Gastrocnemius medialis (tissue), 4 donors: ENCODE measurements at regions of chr10 and their contacts with region 1.

Region 1: GRCh38 chr10:92573798-92574547 is at the start of gene IDE:
- DNase-seq: peak; percentile 65 to 84
- ATAC-seq: peak; percentile 92
- H3K4me3 ChIP-seq: peak within 1 kb of the TSS; percentile 81 to 100 (median 95)
- H3K27ac ChIP-seq: peak within 1 kb of the TSS; percentile 94 to 98 (median 95)
- H3K4me1 ChIP-seq: peaks cover 22 to 30% of the 10 kb centered on the region in 2 donors
- H3K27me3 ChIP-seq: no peaks in the 10 kb centered on the region
- CTCF ChIP-seq: peak; percentile 69 to 94 (median 84)
- POLR2A ChIP-seq: peak; percentile 43 to 55
- total RNA-seq, gene IDE: 41.2 to 71.0 (median 52.9) TPM

Region 2: GRCh38 chr10:91590142-91590903 is 983.6 kb before region 1 on chr10:
- in situ Hi-C with region 1: no loop called
- intact Hi-C with region 1: no loop called
- DNase-seq: peak in 1 of 2 donors; percentile 67
- ATAC-seq: no peak
- H3K4me3 ChIP-seq: no peak overlapping the region
- H3K27ac ChIP-seq: peak overlapping the region; percentile 87 to 91 (median 90)
- H3K4me1 ChIP-seq: peaks cover 75 to 78% of the 10 kb centered on the region in 2 donors
- H3K27me3 ChIP-seq: no peaks in the 10 kb centered on the region
- CTCF ChIP-seq: no peak
- POLR2A ChIP-seq: no peak

Region 3: GRCh38 chr10:92087750-92088395 is 486.1 kb before region 1 on chr10:
- in situ Hi-C with region 1: no loop called
- intact Hi-C with region 1: loop called (anchors 10 kb)
- DNase-seq: peak; percentile 52 to 75
- ATAC-seq: peak; percentile 95 to 98
- H3K4me3 ChIP-seq: no peak overlapping the region
- H3K27ac ChIP-seq: peak overlapping the region; percentile 23 to 58 (median 38)
- H3K4me1 ChIP-seq: peaks cover 24 to 27% of the 10 kb centered on the region in 2 donors
- H3K27me3 ChIP-seq: no peaks in the 10 kb centered on the region
- CTCF ChIP-seq: peak; percentile 77 to 95 (median 81)
- POLR2A ChIP-seq: no peak

Region 4: GRCh38 chr10:92517034-92517655 is 56.8 kb before region 1 on chr10:
- in situ Hi-C with region 1: loop called (anchors 5 to 10 kb)
- intact Hi-C with region 1: loop called (anchors 1 kb)
- DNase-seq: peak; percentile 25 to 50
- ATAC-seq: peak; percentile 80 to 89
- H3K4me3 ChIP-seq: no peak overlapping the region
- H3K27ac ChIP-seq: no peak overlapping the region
- H3K4me1 ChIP-seq: no peaks in the 10 kb centered on the region
- H3K27me3 ChIP-seq: no peaks in the 10 kb centered on the region
- CTCF ChIP-seq: peak; percentile 68 to 82 (median 70)
- POLR2A ChIP-seq: no peak

Region 5: GRCh38 chr10:92523639-92524038 is 50.3 kb before region 1 on chr10:
- in situ Hi-C with region 1: loop called (anchors 5 to 10 kb)
- intact Hi-C with region 1: no loop called
- DNase-seq: no peak
- ATAC-seq: no peak
- H3K4me3 ChIP-seq: no peak overlapping the region
- H3K27ac ChIP-seq: no peak overlapping the region
- H3K4me1 ChIP-seq: no peaks in the 10 kb centered on the region
- H3K27me3 ChIP-seq: no peaks in the 10 kb centered on the region
- CTCF ChIP-seq: no peak
- POLR2A ChIP-seq: no peak

Region 6: GRCh38 chr10:92591550-92592022 is 17.6 kb after region 1 on chr10:
- in situ Hi-C with region 1: no loop called
- intact Hi-C with region 1: loop called (anchors 1 kb)
- DNase-seq: peak; percentile 74 to 89
- ATAC-seq: peak; percentile 78 to 79
- H3K4me3 ChIP-seq: peak overlapping the region; percentile 59 to 86 (median 80)
- H3K27ac ChIP-seq: peak overlapping the region; percentile 79 to 89 (median 86)
- H3K4me1 ChIP-seq: peaks cover 7 to 13% of the 10 kb centered on the region in 2 donors
- H3K27me3 ChIP-seq: no peaks in the 10 kb centered on the region
- CTCF ChIP-seq: no peak
- POLR2A ChIP-seq: peak; percentile 60 to 68

Region 7: GRCh38 chr10:92848441-92849233 is 274.7 kb after region 1 on chr10 and contains the start of gene EXOC6:
- in situ Hi-C with region 1: no loop called
- intact Hi-C with region 1: loop called (anchors 5 kb)
- DNase-seq: peak; percentile 69 to 81
- ATAC-seq: peak; percentile 92 to 93
- H3K4me3 ChIP-seq: peak within 1 kb of the TSS; percentile 74 to 99 (median 94)
- H3K27ac ChIP-seq: peak within 1 kb of the TSS; percentile 79 to 95 (median 88)
- H3K4me1 ChIP-seq: peaks cover 8 to 21% of the 10 kb centered on the region in 2 donors
- H3K27me3 ChIP-seq: no peaks in the 10 kb centered on the region
- CTCF ChIP-seq: peak in 2 of 5 experiments; percentile 15 to 24
- POLR2A ChIP-seq: peak in 1 of 2 donors; percentile 29
- total RNA-seq, gene EXOC6: 11.8 to 16.8 (median 14.6) TPM